Activated B cell treated with CpG ODN at 0.5 μM for 24 hours (primary cell): ENCODE measurements at regions of chr2 and their contacts with region 1.

Region 1: GRCh38 chr2:157363612-157364101 is 38.0 kb upstream of the ERMN start:
- DNase-seq: no peak
- ATAC-seq: peak; percentile 52
- H3K4me3 Mint-ChIP-seq: peak overlapping the region; percentile 16
- H3K27ac Mint-ChIP-seq: peak overlapping the region; percentile 57
- H3K4me1 Mint-ChIP-seq: peaks cover 33% of the 10 kb centered on the region
- H3K27me3 Mint-ChIP-seq: no peaks in the 10 kb centered on the region
- CTCF ChIP-seq: no peak

Region 2: DNA sequence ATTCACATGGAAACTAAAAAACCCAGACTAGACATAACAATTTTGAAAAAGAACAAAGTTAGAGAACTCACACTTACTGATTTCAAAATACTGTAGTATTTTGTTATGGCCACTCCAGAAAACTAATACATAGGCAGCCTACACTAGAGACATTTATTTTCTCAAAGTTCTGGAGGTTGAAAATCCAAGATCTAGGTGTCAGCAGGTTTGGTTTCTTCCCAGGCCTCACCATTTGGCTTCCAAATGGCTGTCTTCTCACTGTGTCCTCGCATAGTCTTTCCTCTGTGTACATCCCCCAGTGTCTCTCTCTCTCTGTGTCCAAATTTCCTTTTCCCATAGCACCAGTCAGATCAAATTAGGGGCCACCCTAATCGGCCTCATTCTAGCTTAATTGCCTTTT is 1126.1 kb before region 1 on chr2:
- CTCF ChIA-PET with region 1: no interaction called
- POLR2A ChIA-PET with region 1: no interaction called
- intact Hi-C with region 1: no loop called
- DNase-seq: no peak
- ATAC-seq: no peak
- H3K4me3 Mint-ChIP-seq: no peak overlapping the region
- H3K27ac Mint-ChIP-seq: no peak overlapping the region
- H3K4me1 Mint-ChIP-seq: no peaks in the 10 kb centered on the region
- H3K27me3 Mint-ChIP-seq: no peaks in the 10 kb centered on the region
- CTCF ChIP-seq: no peak

Region 3: DNA sequence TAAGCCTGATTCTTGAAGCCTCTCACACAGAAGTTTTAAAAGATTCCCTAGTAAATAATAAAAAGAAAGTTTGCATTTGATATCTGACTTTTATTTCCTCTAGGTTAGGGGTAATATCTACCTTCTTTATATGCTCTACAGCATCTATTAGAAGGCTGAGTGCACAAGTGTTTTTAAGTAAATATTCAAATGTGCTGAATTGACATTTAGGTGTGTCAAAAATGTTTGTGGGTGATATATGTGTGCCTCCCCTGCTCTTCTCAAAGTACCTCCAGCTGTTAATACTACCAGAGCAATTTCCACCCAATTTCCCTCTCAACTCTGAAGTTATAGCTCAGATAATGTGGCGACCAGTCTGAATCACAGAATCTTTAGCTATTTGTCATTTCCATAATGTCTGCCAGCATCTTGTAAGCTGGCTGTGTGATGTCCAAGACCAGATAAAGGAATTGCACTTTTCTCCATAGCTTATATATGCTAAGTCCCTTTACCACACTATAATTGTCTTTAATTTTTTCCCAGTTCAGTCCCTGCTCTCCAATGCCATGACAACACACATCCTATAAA is 13.6 kb before region 1 on chr2:
- CTCF ChIA-PET with region 1: no interaction called
- POLR2A ChIA-PET with region 1: no interaction called
- intact Hi-C with region 1: loop called (anchors 2 kb)
- DNase-seq: no peak
- ATAC-seq: no peak
- H3K4me3 Mint-ChIP-seq: no peak overlapping the region
- H3K27ac Mint-ChIP-seq: no peak overlapping the region
- H3K4me1 Mint-ChIP-seq: no peaks in the 10 kb centered on the region
- H3K27me3 Mint-ChIP-seq: no peaks in the 10 kb centered on the region
- CTCF ChIP-seq: no peak

Region 4: GRCh38 chr2:157386247-157386646 is 22.6 kb after region 1 on chr2:
- CTCF ChIA-PET with region 1: no interaction called
- POLR2A ChIA-PET with region 1: no interaction called
- intact Hi-C with region 1: loop called (anchors 2 kb)
- DNase-seq: no peak
- ATAC-seq: no peak
- H3K4me3 Mint-ChIP-seq: no peak overlapping the region
- H3K27ac Mint-ChIP-seq: peak overlapping the region; percentile 6
- H3K4me1 Mint-ChIP-seq: peaks cover 15% of the 10 kb centered on the region
- H3K27me3 Mint-ChIP-seq: no peaks in the 10 kb centered on the region
- CTCF ChIP-seq: no peak

Region 5: DNA sequence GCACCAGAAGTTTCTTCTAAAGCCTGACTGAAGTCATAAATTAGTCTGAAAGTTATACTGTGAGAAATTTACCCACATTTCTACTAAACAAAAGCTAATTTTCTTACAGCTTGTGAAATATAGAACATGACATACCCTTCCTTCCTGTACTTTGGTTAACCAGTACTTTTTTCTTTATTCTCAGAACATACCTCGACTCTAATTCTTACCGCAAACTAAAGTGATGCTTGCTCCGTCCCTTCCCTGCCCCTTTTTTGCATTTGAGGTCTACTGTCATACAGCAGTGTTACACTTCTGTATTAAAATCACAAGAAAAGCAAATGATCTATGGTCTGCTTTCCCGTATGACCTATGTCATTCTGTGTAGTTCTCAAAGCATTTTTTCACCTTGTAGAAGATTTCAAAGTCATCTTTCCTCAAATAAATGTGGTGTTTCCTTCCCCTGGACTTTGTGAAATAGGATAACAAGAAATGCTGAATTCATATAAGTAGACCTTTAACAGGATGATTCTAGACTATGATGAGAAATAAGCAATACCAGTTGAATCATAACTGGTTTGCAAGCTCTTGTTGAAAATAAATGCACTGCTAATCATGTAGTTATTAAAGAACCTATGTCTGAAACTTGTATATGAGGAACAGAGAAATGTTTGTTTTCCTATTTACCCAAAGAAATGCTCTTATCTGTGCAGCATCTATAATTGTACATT is 49.8 kb after region 1 on chr2:
- CTCF ChIA-PET with region 1: no interaction called
- POLR2A ChIA-PET with region 1: no interaction called
- intact Hi-C with region 1: loop called (anchors 2 kb)
- DNase-seq: no peak
- ATAC-seq: peak; percentile 80
- H3K4me3 Mint-ChIP-seq: peak overlapping the region; percentile 42
- H3K27ac Mint-ChIP-seq: peak overlapping the region; percentile 84
- H3K4me1 Mint-ChIP-seq: peaks cover 79% of the 10 kb centered on the region
- H3K27me3 Mint-ChIP-seq: no peaks in the 10 kb centered on the region
- CTCF ChIP-seq: no peak